ENCODE measurements at regions of chr9 and their contacts with region 1.

Region 1: DNA sequence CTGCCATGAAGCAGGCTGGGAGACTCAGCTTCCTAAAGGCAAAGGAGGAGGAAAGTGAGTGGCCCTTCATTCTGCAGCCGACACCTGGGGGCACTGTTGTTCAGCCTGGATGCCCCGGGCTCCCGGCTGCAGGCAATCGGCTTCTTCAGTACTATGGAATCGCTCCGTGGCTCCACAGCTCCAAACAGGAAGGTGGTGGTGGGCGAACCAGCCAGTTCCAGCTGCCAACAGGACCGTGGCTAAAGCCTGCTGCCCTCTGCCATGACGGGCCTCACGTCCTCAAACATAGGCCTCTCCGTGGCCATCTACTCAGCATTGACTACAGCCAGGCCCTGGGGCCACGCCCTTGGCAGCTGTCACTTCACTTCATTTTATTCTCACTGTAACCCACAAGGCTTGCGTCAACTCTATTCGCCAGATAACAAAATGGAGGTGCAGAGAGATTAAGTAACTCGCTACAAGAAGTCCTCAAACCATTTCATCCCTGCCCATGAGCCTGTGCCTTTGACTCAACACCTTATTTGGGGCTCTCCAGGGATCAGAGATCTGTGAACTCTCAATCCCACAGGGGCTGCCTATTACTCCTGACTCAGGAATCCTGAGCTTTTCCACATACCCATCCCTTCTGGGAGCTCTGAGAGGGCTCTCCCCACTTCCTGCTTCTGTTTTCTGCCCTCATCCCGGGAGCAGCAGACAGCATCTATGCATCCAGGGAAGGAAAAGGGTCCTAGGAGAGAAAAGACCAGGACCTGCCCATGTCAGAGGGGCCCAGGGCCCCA is 38.0 kb downstream of the PAX5 start:
- DNase-seq: peak; percentile 71
- ATAC-seq: peak; percentile 80
- H3K4me3 Mint-ChIP-seq: no peak overlapping the region
- H3K27ac Mint-ChIP-seq: no peak overlapping the region
- H3K4me1 Mint-ChIP-seq: no peaks in the 10 kb centered on the region
- H3K27me3 Mint-ChIP-seq: peaks cover 22% of the 10 kb centered on the region
- CTCF ChIP-seq: peak; percentile 65

Region 2: DNA sequence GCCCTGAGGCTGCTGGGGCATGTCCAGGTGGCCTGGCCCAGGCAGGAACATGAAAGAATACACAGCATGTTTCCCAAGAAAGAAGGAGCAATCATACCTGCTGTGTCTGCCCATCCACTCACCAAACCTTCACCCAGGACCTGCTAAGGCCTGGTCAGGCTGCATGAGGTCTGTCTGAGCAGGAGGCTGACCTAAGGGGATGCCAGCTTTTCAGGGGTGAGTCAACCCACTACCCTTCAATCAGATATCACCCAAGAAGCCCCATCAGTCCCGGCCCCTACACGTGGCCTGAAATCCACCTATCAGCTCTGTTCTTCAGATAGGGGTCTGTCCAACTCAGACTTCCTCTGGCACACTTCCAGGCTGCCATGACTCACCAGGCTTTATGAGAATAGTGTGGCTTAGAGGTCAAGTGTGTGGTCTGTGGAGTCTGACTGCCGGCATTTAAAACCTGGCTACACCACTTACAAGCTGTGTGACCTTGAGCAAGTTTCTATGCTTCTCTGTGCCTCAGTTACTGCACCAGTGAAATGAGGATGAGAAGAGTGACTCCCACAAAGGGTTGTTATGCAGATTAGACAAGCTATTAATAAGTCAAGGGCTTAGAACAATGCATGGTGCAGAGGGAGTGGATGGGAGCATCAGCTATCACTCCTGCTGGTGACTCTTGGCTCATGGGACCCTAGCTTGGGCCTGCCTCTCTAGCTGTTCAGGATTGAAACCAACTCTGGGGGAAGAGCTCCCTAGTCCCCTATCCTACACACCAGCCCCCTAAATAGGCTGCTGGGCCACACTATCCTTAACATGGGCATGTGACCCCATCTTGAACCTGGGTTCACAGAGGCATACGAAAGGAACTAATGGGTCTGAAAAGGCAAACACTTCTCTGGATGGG is 92.3 kb before region 1 on chr9:
- CTCF ChIA-PET with region 1: no interaction called
- POLR2A ChIA-PET with region 1: no interaction called
- intact Hi-C with region 1: no loop called
- DNase-seq: peak; percentile 89
- ATAC-seq: peak; percentile 90
- H3K4me3 Mint-ChIP-seq: no peak overlapping the region
- H3K27ac Mint-ChIP-seq: no peak overlapping the region
- H3K4me1 Mint-ChIP-seq: peaks cover 6% of the 10 kb centered on the region
- H3K27me3 Mint-ChIP-seq: peaks cover 22% of the 10 kb centered on the region
- CTCF ChIP-seq: no peak

Region 3: GRCh38 chr9:37042421-37042820 is 46.3 kb after region 1 on chr9:
- CTCF ChIA-PET with region 1: interaction called, 10 read pairs
- POLR2A ChIA-PET with region 1: no interaction called
- intact Hi-C with region 1: no loop called
- DNase-seq: no peak
- ATAC-seq: no peak
- H3K4me3 Mint-ChIP-seq: no peak overlapping the region
- H3K27ac Mint-ChIP-seq: no peak overlapping the region
- H3K4me1 Mint-ChIP-seq: peaks cover 5% of the 10 kb centered on the region
- H3K27me3 Mint-ChIP-seq: peaks cover 53% of the 10 kb centered on the region
- CTCF ChIP-seq: no peak

Region 4: DNA sequence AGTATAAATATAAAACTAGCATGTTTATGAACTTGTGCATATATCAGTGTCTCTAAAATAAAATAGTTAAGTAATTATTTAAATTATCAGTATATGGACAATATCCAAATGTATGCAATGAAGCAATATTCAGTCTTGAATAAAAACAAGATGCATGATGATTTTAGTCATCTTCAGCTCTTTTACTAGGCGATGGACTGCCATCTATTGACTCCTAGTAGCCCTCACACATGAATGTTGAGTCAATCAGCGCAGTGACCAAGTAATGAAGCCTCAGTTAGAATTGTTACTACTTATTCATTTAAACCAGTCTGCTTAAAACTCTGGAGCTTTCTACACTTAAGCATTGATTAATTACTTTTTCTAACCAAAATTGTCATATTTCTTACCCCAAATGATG is 333.5 kb after region 1 on chr9:
- CTCF ChIA-PET with region 1: interaction called, 15 read pairs
- POLR2A ChIA-PET with region 1: no interaction called
- intact Hi-C with region 1: no loop called
- DNase-seq: peak; percentile 16
- ATAC-seq: peak; percentile 60
- H3K4me3 Mint-ChIP-seq: no peak overlapping the region
- H3K27ac Mint-ChIP-seq: no peak overlapping the region
- H3K4me1 Mint-ChIP-seq: peaks cover 5% of the 10 kb centered on the region
- H3K27me3 Mint-ChIP-seq: no peaks in the 10 kb centered on the region
- CTCF ChIP-seq: peak; percentile 20

Region 5: DNA sequence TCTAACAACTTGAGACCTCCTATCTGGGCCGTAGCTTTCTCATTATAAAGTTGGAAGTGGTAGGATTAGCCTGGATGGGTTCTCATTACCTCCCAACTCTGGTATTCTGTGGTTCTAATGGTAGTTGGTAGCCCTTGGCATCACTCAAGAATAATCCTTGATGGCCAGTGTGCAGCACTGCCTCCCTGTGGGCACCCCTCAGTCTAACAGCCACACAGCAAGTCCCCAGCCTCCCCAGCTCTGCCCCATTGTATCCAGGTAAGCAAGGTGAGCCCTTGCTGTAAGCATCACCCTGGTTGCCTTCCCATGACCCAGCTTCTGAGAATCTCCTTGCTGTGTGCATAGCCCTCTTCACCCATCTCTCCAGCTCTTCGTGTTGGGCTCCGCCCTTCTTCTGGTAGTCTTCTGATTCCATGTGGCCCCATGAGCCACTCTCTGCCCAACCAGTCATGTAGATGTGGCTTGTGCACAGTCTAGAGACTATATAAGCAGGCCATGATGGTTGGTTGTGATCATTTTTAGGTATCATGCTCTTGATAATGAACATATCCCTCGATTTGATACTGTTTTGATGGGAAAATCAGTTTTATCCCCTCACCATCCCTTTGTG is 368.7 kb after region 1 on chr9:
- CTCF ChIA-PET with region 1: interaction called, 6 read pairs
- POLR2A ChIA-PET with region 1: no interaction called
- intact Hi-C with region 1: loop called (anchors 10 kb)
- DNase-seq: peak; percentile 36
- ATAC-seq: peak; percentile 62
- H3K4me3 Mint-ChIP-seq: no peak overlapping the region
- H3K27ac Mint-ChIP-seq: no peak overlapping the region
- H3K4me1 Mint-ChIP-seq: no peaks in the 10 kb centered on the region
- H3K27me3 Mint-ChIP-seq: no peaks in the 10 kb centered on the region
- CTCF ChIP-seq: peak; percentile 42

Region 6: GRCh38 chr9:37390759-37391158 is 394.6 kb after region 1 on chr9:
- CTCF ChIA-PET with region 1: interaction called, 3 read pairs
- POLR2A ChIA-PET with region 1: no interaction called
- intact Hi-C with region 1: loop called (anchors 10 kb)
- DNase-seq: peak; percentile 64
- ATAC-seq: peak; percentile 69
- H3K4me3 Mint-ChIP-seq: no peak overlapping the region
- H3K27ac Mint-ChIP-seq: no peak overlapping the region
- H3K4me1 Mint-ChIP-seq: no peaks in the 10 kb centered on the region
- H3K27me3 Mint-ChIP-seq: no peaks in the 10 kb centered on the region
- CTCF ChIP-seq: peak; percentile 57

Measured in activated CD8-positive, alpha-beta T cell treated with anti-CD3 and anti-CD28 coated beads for 36 hours (primary cell).